CD4-positive, alpha-beta memory T cell (primary cell): ENCODE measurements at regions of chr6 and their contacts with region 1.

Region 1: GRCh38 chr6:109482905-109483735 is at the start of gene ZBTB24:
- DNase-seq: peak; percentile 90 to 93 (median 91)
- H3K4me3 ChIP-seq: peak within 1 kb of the TSS; percentile 76 to 77
- H3K4me3 Mint-ChIP-seq: peak within 1 kb of the TSS; percentile 84 to 97 (median 96)
- H3K27ac ChIP-seq: peak within 1 kb of the TSS; percentile 69
- H3K27ac Mint-ChIP-seq: peak within 1 kb of the TSS; percentile 89 to 97 (median 95)
- H3K4me1 ChIP-seq: peaks cover 46% of the 10 kb centered on the region
- H3K4me1 Mint-ChIP-seq: peaks cover 41 to 54% (median 47%) of the 10 kb centered on the region in 4 donors
- H3K27me3 ChIP-seq: no peaks in the 10 kb centered on the region
- H3K27me3 Mint-ChIP-seq: no peaks in the 10 kb centered on the region
- total RNA-seq, gene ZBTB24: 27.2 to 28.4 TPM

Region 2: DNA sequence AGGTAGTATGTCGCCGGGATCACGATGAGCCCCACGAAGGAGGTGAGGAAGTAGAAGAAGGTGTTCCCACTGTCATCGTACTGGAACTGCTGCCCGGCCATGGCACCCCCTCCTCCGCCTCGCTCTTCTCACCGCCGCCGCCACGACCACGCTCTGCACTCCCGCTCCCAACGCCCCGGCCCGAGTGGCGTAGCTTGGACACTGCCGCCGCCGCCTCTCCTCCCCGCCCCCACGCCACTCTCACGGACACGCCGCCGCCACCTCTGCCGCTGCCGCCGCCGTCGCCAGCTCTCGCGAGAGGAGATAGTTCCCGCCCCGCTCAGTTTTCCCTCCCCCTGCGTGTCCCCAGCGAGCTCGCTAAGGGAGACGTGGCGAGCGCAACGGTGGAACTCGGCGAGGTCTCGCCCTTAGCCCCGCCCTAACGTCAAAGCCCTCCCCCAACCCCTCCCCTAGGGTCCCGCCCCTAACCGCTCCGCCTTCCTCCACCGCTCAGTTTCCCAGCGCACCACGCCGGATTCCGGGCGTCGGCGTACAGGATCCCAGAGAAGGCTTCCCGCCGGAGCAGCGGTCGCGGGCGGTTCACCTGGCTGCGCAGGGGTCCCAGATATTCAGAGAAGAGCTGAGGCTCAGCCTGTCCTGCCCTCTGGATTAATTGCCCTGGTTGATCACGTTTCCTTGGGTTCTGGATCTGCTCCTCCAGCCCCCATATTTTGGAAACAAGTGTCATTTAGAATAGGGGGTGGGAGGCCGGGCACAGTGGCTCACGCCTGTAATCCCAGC is 1525.0 kb before region 1 on chr6 and contains the start of gene SEC63:
- CTCF ChIA-PET with region 1: no interaction called
- POLR2A ChIA-PET with region 1: no interaction called
- intact Hi-C with region 1: loop called (anchors 5 kb)
- DNase-seq: peak; percentile 95 to 96 (median 96)
- H3K4me3 ChIP-seq: peak within 1 kb of the TSS; percentile 55 to 80
- H3K4me3 Mint-ChIP-seq: peak within 1 kb of the TSS; percentile 92 to 100 (median 98)
- H3K27ac ChIP-seq: peak within 1 kb of the TSS; percentile 86
- H3K27ac Mint-ChIP-seq: peak within 1 kb of the TSS; percentile 92 to 98 (median 97)
- H3K4me1 ChIP-seq: peaks cover 29% of the 10 kb centered on the region
- H3K4me1 Mint-ChIP-seq: peaks cover 18 to 39% (median 29%) of the 10 kb centered on the region in 4 donors
- H3K27me3 ChIP-seq: no peaks in the 10 kb centered on the region
- H3K27me3 Mint-ChIP-seq: no peaks in the 10 kb centered on the region
- total RNA-seq, gene SEC63: 91.7 to 95.5 TPM

Region 3: GRCh38 chr6:109009236-109009961 is 473.7 kb before region 1 on chr6:
- CTCF ChIA-PET with region 1: no interaction called
- POLR2A ChIA-PET with region 1: no interaction called
- intact Hi-C with region 1: loop called (anchors 10 kb)
- DNase-seq: peak; percentile 90 to 92 (median 90)
- H3K4me3 ChIP-seq: peak overlapping the region; percentile 77 to 86
- H3K4me3 Mint-ChIP-seq: peak overlapping the region; percentile 94 to 100 (median 98)
- H3K27ac ChIP-seq: peak overlapping the region; percentile 96
- H3K27ac Mint-ChIP-seq: peak overlapping the region; percentile 94 to 100 (median 100)
- H3K4me1 ChIP-seq: peaks cover 67% of the 10 kb centered on the region
- H3K4me1 Mint-ChIP-seq: peaks cover 47 to 81% (median 60%) of the 10 kb centered on the region in 4 donors
- H3K27me3 ChIP-seq: no peaks in the 10 kb centered on the region
- H3K27me3 Mint-ChIP-seq: no peaks in the 10 kb centered on the region

Region 4: DNA sequence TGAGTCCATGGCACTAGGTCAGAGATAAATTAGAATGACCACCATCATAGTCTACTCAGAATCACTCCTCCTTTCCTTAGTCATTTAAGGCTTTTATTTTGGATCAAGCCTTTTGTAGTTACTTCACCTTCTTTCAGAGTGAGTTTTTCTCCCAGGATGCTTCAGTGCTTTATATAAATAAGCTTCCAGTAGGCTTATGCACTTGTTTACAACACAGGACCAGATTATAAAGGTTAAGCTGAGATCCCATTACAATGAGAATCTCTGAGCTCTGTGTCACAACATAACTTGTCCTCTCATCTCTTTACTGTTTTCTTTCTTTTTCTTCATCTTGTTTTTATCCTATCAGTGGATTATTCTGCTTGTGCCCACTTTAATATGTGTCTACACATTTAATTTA is 339.9 kb before region 1 on chr6:
- CTCF ChIA-PET with region 1: no interaction called
- POLR2A ChIA-PET with region 1: no interaction called
- intact Hi-C with region 1: no loop called
- DNase-seq: no peak
- H3K4me3 ChIP-seq: no peak overlapping the region
- H3K4me3 Mint-ChIP-seq: no peak overlapping the region
- H3K27ac ChIP-seq: no peak overlapping the region
- H3K27ac Mint-ChIP-seq: no peak overlapping the region
- H3K4me1 ChIP-seq: no peaks in the 10 kb centered on the region
- H3K4me1 Mint-ChIP-seq: no peaks in the 10 kb centered on the region
- H3K27me3 ChIP-seq: no peaks in the 10 kb centered on the region
- H3K27me3 Mint-ChIP-seq: no peaks in the 10 kb centered on the region

Region 5: DNA sequence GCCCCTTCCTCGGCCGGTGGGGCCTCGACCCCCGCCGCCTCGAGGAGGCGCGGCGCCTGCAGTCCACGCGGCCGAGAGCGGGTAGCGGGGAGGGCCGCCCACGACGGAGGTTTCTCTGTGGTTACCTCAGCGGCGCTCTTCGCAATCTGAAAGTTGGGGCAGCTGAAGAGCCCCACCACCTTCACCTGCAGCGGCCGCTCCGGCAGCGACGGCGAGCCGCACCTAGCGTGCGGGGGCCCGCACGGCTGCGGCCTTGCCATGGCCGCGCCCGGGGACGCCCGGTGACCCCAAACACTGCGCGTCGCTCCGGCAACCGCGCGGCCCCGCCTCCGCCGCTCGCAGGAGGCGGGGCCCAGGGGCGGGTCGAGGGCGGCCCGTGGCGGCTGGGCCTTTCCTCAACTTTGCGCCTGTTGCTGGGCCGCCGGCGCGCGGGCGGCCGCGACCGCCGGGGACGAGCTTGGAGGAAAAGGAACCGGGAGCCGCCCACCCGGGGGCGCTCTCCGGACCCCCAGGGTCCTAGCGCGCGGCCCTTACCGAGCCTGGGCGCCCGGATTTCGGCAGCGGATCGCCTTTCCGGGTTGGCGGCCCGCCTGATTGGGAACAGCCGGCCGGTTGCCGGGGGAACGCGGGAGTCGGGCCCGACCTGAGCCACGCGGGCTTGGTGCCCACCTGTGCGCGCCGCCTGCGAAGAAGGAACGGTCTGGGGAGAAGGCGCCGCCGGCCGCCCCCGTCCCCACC is 42.6 kb before region 1 on chr6 and contains the starts of genes PPIL6 and SMPD2:
- CTCF ChIA-PET with region 1: interaction called, 15 read pairs
- POLR2A ChIA-PET with region 1: interaction called, 100 read pairs
- intact Hi-C with region 1: loop called (anchors 1 kb)
- DNase-seq: peak; percentile 77 to 84 (median 80)
- H3K4me3 ChIP-seq: peak within 1 kb of the TSS; percentile 69 to 82
- H3K4me3 Mint-ChIP-seq: peak within 1 kb of the TSS; percentile 91 to 98 (median 94)
- H3K27ac ChIP-seq: peak within 1 kb of the TSS; percentile 89
- H3K27ac Mint-ChIP-seq: peak within 1 kb of the TSS; percentile 96 to 98 (median 97)
- H3K4me1 ChIP-seq: peaks cover 25% of the 10 kb centered on the region
- H3K4me1 Mint-ChIP-seq: peaks cover 15 to 32% (median 21%) of the 10 kb centered on the region in 4 donors
- H3K27me3 ChIP-seq: no peaks in the 10 kb centered on the region
- H3K27me3 Mint-ChIP-seq: no peaks in the 10 kb centered on the region
- total RNA-seq, gene PPIL6: 0.39 to 0.52 TPM
- total RNA-seq, gene SMPD2: 21.7 to 23.6 TPM

Region 6: GRCh38 chr6:109465772-109466171 is 17.3 kb before region 1 on chr6:
- CTCF ChIA-PET with region 1: interaction called, 29 read pairs
- POLR2A ChIA-PET with region 1: interaction called, 132 read pairs
- intact Hi-C with region 1: loop called (anchors 2 kb)
- DNase-seq: no peak
- H3K4me3 ChIP-seq: no peak overlapping the region
- H3K4me3 Mint-ChIP-seq: no peak overlapping the region
- H3K27ac ChIP-seq: no peak overlapping the region
- H3K27ac Mint-ChIP-seq: peak overlapping the region in 4 of 7 donors; percentile 9 to 77 (median 58)
- H3K4me1 ChIP-seq: peaks cover 19% of the 10 kb centered on the region
- H3K4me1 Mint-ChIP-seq: peaks cover 35 to 60% (median 41%) of the 10 kb centered on the region in 4 donors
- H3K27me3 ChIP-seq: no peaks in the 10 kb centered on the region
- H3K27me3 Mint-ChIP-seq: no peaks in the 10 kb centered on the region

Region 7: DNA sequence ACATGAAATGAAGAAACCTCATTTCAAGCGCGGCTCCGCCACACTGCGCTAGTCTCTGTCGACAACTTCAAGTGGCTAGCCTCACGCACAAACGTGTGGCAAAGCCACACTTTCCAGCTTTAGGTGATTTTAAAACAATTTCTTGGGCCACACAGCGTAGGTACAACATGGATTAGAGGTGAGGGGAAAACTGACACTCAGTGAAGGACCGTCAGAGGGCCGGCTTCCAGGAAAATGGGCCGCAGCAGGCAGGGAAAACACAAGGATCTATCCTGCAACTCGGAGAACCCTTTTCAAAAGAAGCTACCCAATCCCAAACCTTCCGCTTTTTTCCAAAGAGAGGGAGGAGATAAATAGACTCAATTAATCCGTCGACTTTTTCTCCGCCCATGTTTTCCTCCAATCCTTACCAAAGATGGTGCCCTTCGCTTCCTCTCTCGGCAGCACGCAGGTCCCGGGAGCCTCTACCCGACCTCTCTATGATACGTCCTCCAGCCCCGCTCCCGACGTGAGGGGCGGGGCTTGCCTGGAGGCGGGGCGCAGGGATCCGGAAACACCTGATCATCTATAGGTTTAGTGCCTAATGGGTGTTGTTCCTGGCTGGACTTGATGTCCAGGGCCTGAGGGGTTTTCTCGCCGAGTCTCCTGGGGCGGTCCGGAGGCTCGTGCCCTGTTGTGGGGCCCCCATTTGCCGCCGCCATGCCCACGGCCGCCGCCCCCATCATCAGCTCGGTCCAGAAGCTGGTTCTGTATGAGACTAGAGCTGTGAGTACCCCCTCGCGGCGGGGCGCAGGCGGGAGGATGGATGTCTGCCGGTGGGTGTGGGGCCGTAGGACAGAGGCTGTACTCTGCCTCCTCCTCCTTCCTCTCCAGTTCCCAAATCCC is 207.9 kb after region 1 on chr6 and contains the starts of genes AK9 and FIG4:
- CTCF ChIA-PET with region 1: no interaction called
- POLR2A ChIA-PET with region 1: interaction called, 7 read pairs
- intact Hi-C with region 1: loop called (anchors 1 kb)
- DNase-seq: peak; percentile 82 to 90 (median 84)
- H3K4me3 ChIP-seq: peak within 1 kb of the TSS; percentile 87 to 89
- H3K4me3 Mint-ChIP-seq: peak within 1 kb of the TSS; percentile 95 to 100 (median 99)
- H3K27ac ChIP-seq: peak within 1 kb of the TSS; percentile 74
- H3K27ac Mint-ChIP-seq: peak within 1 kb of the TSS; percentile 93 to 99 (median 97)
- H3K4me1 ChIP-seq: peaks cover 26% of the 10 kb centered on the region
- H3K4me1 Mint-ChIP-seq: peaks cover 10 to 29% (median 22%) of the 10 kb centered on the region in 4 donors
- H3K27me3 ChIP-seq: no peaks in the 10 kb centered on the region
- H3K27me3 Mint-ChIP-seq: peaks cover 0 to 2% of the 10 kb centered on the region in 2 donors
- total RNA-seq, gene AK9: 15.6 to 18.4 TPM
- total RNA-seq, gene FIG4: 14.4 to 14.8 TPM